GM10248 (cell line): ENCODE measurements at regions of chr2 and their contacts with region 1.

Region 1: GRCh38 chr2:27174316-27175040 is 25.7 kb downstream of the TCF23 start:
- DNase-seq: no peak
- CTCF ChIP-seq: no peak

Region 2: GRCh38 chr2:27152786-27153510 is 21.5 kb before region 1 on chr2:
- CTCF ChIA-PET with region 1: interaction called, 30 read pairs
- POLR2A ChIA-PET with region 1: interaction called, 3 read pairs
- DNase-seq: no peak
- CTCF ChIP-seq: no peak

Region 3: GRCh38 chr2:27159271-27159670 is 15.2 kb before region 1 on chr2:
- CTCF ChIA-PET with region 1: interaction called, 30 read pairs
- POLR2A ChIA-PET with region 1: interaction called, 3 read pairs
- DNase-seq: no peak
- CTCF ChIP-seq: no peak

Region 4: DNA sequence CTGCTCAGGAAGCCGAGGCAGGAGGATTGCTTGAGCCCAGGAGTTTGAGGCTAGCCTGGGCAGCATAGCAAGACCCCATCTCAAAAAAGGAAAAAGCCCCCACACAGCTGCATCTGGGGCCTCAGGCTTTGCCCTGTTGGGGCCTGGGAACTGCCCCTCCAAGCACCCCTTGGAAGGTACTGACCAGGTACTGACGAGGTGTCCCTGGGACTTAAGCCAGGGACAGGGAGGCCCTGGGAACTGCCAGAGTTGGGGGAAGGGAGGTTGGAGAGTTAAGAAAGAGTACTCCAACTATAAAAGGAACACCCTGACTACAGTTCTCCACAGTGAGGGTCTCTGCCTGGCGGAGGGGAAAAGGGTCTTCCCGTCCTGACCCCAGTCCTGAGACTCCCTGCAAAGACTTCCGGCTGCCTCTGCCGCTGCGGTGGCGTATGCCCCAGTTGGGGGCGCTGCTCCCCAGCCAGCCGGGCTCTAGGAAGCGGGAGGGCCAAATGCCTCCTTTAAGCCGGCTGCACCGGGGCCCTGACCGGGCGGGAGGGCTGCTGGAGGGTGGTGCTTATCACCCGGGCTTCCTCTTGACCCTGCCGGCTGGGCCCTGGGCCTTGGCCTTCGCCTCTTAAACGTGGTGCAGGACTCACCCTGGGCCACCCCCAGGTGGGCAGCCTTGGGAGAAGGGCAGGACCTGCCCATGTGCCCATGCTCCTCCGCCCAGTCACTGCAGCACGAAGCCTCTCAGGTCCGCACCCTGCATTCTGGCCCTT is 75.6 kb after region 1 on chr2:
- CTCF ChIA-PET with region 1: no interaction called
- POLR2A ChIA-PET with region 1: no interaction called
- DNase-seq: peak; percentile 82
- CTCF ChIP-seq: peak; percentile 76